Activated CD8-positive, alpha-beta T cell treated with anti-CD3 and anti-CD28 coated beads for 36 hours (primary cell): ENCODE measurements at regions of chr14 and their contacts with region 1.

Region 1: GRCh38 chr14:78598041-78598920 is 428.1 kb downstream of the NRXN3 start:
- DNase-seq: peak; percentile 57
- ATAC-seq: peak; percentile 83
- H3K4me3 Mint-ChIP-seq: no peak overlapping the region
- H3K27ac Mint-ChIP-seq: no peak overlapping the region
- H3K4me1 Mint-ChIP-seq: no peaks in the 10 kb centered on the region
- H3K27me3 Mint-ChIP-seq: peaks cover 8% of the 10 kb centered on the region
- CTCF ChIP-seq: peak; percentile 78

Region 2: GRCh38 chr14:78412475-78412874 is 185.8 kb before region 1 on chr14:
- CTCF ChIA-PET with region 1: no interaction called
- POLR2A ChIA-PET with region 1: no interaction called
- intact Hi-C with region 1: no loop called
- DNase-seq: no peak
- ATAC-seq: no peak
- H3K4me3 Mint-ChIP-seq: no peak overlapping the region
- H3K27ac Mint-ChIP-seq: no peak overlapping the region
- H3K4me1 Mint-ChIP-seq: no peaks in the 10 kb centered on the region
- H3K27me3 Mint-ChIP-seq: no peaks in the 10 kb centered on the region
- CTCF ChIP-seq: no peak

Region 3: DNA sequence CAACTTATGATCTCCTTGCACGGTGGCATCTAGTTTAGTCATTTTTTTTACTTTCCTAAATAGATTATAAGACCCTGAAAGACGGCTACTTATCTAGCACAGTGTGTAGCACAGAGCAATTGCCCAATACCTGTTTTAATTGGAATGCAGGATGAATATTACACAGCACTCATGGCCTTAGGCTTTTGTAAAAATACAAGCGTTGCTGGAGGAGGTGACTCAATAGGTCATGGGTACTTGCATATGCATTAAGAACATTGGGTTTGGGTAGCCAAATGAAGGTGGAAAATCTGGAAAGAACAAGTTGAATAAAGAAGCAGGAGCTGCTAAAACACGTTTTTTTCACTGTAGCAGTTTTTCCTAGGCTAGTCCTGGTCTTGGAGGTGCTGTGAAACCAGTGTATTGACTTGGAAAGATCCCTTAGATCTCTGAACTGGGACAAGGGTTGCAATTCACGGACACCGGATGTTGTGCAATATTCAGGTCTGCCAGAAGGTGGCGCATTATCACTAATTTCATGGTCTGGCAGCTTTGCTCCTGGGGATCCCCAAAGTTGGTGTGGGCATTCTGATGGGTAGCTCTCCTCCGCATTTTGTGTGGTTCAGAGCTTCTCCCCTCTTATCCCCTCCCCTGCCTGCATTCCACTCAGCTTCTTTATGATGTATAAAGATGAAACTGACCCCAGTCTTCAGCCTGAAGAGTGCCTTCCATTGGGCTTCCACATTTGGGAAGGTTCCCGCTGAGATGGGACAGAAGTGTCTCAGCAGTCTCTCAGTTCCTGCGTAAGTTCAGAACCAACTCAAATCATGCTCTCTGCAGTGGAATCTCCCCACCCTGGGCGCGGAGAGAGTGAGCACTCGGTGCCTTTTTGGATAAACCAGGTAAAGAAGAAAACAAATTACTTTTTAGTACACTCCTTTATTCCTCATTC is 149.9 kb before region 1 on chr14:
- CTCF ChIA-PET with region 1: interaction called, 7 read pairs
- POLR2A ChIA-PET with region 1: no interaction called
- intact Hi-C with region 1: loop called (anchors 10 kb)
- DNase-seq: peak; percentile 65
- ATAC-seq: no peak
- H3K4me3 Mint-ChIP-seq: no peak overlapping the region
- H3K27ac Mint-ChIP-seq: no peak overlapping the region
- H3K4me1 Mint-ChIP-seq: no peaks in the 10 kb centered on the region
- H3K27me3 Mint-ChIP-seq: no peaks in the 10 kb centered on the region
- CTCF ChIP-seq: peak; percentile 67

Region 4: DNA sequence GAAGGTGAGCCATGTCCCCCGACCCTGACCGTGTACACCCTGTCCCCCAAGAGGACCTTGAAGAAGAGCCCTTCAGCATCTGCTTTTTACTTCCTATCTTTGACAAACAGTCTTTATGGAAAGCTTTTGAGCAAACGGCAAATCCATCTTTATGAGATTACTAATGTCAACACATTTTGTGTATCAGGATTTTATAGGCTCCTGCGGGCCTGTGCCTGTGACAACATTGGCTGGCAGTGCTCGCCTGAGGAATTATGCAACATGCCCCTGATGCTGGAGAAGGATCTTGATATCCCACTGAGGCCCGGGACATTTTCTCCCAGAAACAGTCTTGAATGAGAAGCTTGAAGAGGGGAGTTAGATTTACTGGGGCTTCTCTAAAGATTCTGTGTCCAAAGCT is 11.6 kb before region 1 on chr14:
- CTCF ChIA-PET with region 1: interaction called, 12 read pairs
- POLR2A ChIA-PET with region 1: interaction called, 3 read pairs
- intact Hi-C with region 1: no loop called
- DNase-seq: no peak
- ATAC-seq: no peak
- H3K4me3 Mint-ChIP-seq: no peak overlapping the region
- H3K27ac Mint-ChIP-seq: no peak overlapping the region
- H3K4me1 Mint-ChIP-seq: no peaks in the 10 kb centered on the region
- H3K27me3 Mint-ChIP-seq: peaks cover 1% of the 10 kb centered on the region
- CTCF ChIP-seq: no peak